Psoas muscle (tissue), 8 donors: ENCODE measurements at regions of chr4 and their contacts with region 1.

Region 1: GRCh38 chr4:39719804-39720580 is 22.1 kb downstream of the UBE2K start:
- DNase-seq: no peak
- ATAC-seq: no peak
- H3K4me3 ChIP-seq: no peak overlapping the region
- H3K27ac ChIP-seq: no peak overlapping the region
- H3K4me1 ChIP-seq: peaks cover 26% of the 10 kb centered on the region
- H3K27me3 ChIP-seq: no peaks in the 10 kb centered on the region
- CTCF ChIP-seq: no peak

Region 2: DNA sequence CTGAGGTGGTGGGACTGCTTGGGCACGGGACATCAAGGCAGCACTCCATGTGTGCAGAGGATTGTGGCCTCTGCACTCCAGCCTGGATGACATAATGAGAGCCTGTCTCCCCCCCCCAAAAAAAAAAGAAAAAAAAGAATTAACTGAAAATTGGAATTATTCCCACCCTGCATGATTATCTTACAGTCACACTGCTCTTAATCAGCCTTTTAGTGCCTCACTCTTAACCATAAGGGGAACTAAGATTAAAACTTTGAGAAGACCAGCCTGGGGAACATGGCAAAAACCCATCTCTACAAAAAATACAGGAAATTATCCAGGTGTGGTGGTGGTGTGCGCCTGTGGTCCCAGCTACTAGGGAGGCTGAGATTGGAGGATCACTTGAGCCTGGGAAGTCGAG is 72.5 kb after region 1 on chr4:
- intact Hi-C with region 1: loop called in 1 of 2 experiments (anchors 2 kb)
- DNase-seq: no peak
- ATAC-seq: no peak
- H3K4me3 ChIP-seq: no peak overlapping the region
- H3K27ac ChIP-seq: no peak overlapping the region
- H3K4me1 ChIP-seq: no peaks in the 10 kb centered on the region
- H3K27me3 ChIP-seq: no peaks in the 10 kb centered on the region
- CTCF ChIP-seq: no peak